Naive thymus-derived CD4-positive, alpha-beta T cell (primary cell): ENCODE measurements at regions of chr15 and their contacts with region 1.

Region 1: DNA sequence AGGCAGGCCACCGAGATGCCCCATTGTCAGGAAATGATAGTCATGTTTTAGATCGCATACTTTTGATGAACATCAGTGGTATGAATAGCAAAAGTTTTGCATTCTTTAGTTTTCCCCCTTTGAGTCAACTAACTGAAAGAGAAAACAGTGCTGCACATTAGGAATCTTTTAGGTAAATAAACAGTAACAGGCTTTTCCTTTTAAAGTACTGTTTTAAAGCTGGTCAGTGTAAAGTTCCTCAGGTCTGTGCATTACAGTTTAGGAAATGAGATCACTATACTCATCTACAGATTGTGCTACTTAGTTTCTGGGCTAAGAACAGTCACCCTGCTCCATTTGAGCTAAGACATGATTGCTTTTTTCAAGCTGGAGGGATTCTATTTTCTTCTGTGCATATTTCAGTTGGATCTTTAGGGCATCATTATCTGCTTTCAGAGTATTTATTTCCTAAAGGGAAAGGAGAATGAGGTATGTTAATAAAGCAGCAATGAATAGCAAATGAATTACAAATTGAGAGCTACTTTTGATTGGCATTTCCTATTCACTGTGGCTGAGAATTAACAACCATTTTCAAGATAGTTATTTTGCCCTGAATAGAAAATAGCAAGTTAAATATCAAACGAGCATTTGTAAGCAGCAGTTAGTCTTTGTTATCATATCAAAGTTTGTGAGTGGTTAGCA is 36.5 kb downstream of the FAM98B start:
- DNase-seq: no peak
- ATAC-seq: no peak
- H3K4me3 ChIP-seq: no peak overlapping the region
- H3K4me3 Mint-ChIP-seq: no peak overlapping the region
- H3K27ac ChIP-seq: peak overlapping the region; percentile 14
- H3K27ac Mint-ChIP-seq: peak overlapping the region in 8 of 9 donors; percentile 18 to 93 (median 67)
- H3K4me1 ChIP-seq: peaks cover 0 to 13% of the 10 kb centered on the region in 2 donors
- H3K4me1 Mint-ChIP-seq: peaks cover 7 to 48% (median 42%) of the 10 kb centered on the region in 7 donors
- H3K27me3 ChIP-seq: no peaks in the 10 kb centered on the region
- H3K27me3 Mint-ChIP-seq: no peaks in the 10 kb centered on the region

Region 2: DNA sequence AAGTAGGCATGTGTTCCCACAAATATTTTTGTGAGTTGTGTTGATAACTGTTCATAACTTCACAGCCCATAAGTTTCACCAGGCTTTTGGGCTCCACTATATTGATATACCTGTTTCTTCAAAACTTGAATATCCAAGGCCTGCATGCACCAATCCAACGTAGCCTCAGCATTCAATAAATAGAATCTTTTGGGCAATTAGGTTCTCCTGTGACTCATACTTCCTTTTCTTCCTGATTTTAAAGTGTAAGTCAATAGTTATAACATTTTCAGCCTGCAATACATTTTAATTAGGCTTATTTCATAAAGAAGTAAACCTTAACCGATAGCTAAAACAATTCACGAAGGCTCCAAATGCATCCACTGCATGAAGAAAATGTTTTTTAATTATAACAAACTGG is 335.5 kb before region 1 on chr15:
- CTCF ChIA-PET with region 1: no interaction called
- POLR2A ChIA-PET with region 1: no interaction called
- intact Hi-C with region 1: no loop called
- DNase-seq: no peak
- ATAC-seq: no peak
- H3K4me3 ChIP-seq: no peak overlapping the region
- H3K4me3 Mint-ChIP-seq: no peak overlapping the region
- H3K27ac ChIP-seq: no peak overlapping the region
- H3K27ac Mint-ChIP-seq: no peak overlapping the region
- H3K4me1 ChIP-seq: no peaks in the 10 kb centered on the region
- H3K4me1 Mint-ChIP-seq: no peaks in the 10 kb centered on the region
- H3K27me3 ChIP-seq: no peaks in the 10 kb centered on the region
- H3K27me3 Mint-ChIP-seq: peaks cover 6 to 38% (median 23%) of the 10 kb centered on the region in 5 donors

Region 3: GRCh38 chr15:38479266-38479665 is 11.1 kb before region 1 on chr15:
- CTCF ChIA-PET with region 1: interaction called, 7 read pairs
- POLR2A ChIA-PET with region 1: interaction called, 3 read pairs
- intact Hi-C with region 1: loop called in 1 of 2 experiments (anchors 2 kb)
- DNase-seq: no peak
- ATAC-seq: no peak
- H3K4me3 ChIP-seq: no peak overlapping the region
- H3K4me3 Mint-ChIP-seq: no peak overlapping the region
- H3K27ac ChIP-seq: no peak overlapping the region
- H3K27ac Mint-ChIP-seq: peak overlapping the region in 6 of 9 donors; percentile 17 to 87 (median 80)
- H3K4me1 ChIP-seq: peaks cover 14 to 19% of the 10 kb centered on the region in 2 donors
- H3K4me1 Mint-ChIP-seq: peaks cover 26 to 56% (median 41%) of the 10 kb centered on the region in 7 donors
- H3K27me3 ChIP-seq: no peaks in the 10 kb centered on the region
- H3K27me3 Mint-ChIP-seq: no peaks in the 10 kb centered on the region

Region 4: GRCh38 chr15:38508647-38509046 is 18.3 kb after region 1 on chr15:
- CTCF ChIA-PET with region 1: no interaction called
- POLR2A ChIA-PET with region 1: interaction called, 3 read pairs
- intact Hi-C with region 1: loop called (anchors 2 kb)
- DNase-seq: no peak
- ATAC-seq: no peak
- H3K4me3 ChIP-seq: no peak overlapping the region
- H3K4me3 Mint-ChIP-seq: peak overlapping the region in 1 of 10 donors; percentile 44
- H3K27ac ChIP-seq: no peak overlapping the region
- H3K27ac Mint-ChIP-seq: peak overlapping the region; percentile 55 to 84 (median 72)
- H3K4me1 ChIP-seq: no peaks in the 10 kb centered on the region
- H3K4me1 Mint-ChIP-seq: peaks cover 0 to 50% (median 0%) of the 10 kb centered on the region in 7 donors
- H3K27me3 ChIP-seq: no peaks in the 10 kb centered on the region
- H3K27me3 Mint-ChIP-seq: no peaks in the 10 kb centered on the region